Activated CD4-positive, alpha-beta memory T cell treated with anti-CD3 and anti-CD28 coated beads, Interleukin-2, amount 10 ng/mL, durations not matched to agents 7 days and 5 days (primary cell): ENCODE measurements at regions of chr11 and their contacts with region 1.

Region 1: GRCh38 chr11:11856638-11857037 is 14.9 kb downstream of the USP47 start:
- DNase-seq: no peak
- H3K4me3 Mint-ChIP-seq: no peak overlapping the region
- H3K27ac Mint-ChIP-seq: no peak overlapping the region
- H3K4me1 Mint-ChIP-seq: peaks cover 41% of the 10 kb centered on the region
- H3K27me3 Mint-ChIP-seq: no peaks in the 10 kb centered on the region

Region 2: DNA sequence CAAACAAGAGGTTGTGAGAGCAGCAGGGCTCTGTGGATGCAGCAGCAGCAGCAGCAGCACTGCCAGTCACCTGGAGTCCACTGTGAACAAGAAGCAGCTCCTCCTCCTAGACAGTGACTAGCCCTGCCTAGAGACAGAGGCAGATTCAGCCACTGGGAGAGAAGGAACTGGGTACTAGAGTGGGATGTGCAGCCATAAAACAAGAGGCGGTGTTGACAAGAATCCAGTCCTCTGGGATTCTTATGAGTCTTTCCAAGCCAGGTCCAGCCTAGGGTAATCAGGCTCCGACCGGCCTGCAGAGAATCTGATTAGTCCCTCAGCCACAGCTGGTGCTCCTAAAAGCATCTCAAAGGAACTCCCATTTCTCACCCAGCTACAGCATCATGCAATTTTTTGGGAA is 98.7 kb before region 1 on chr11:
- CTCF ChIA-PET with region 1: no interaction called
- POLR2A ChIA-PET with region 1: no interaction called
- DNase-seq: no peak
- H3K4me3 Mint-ChIP-seq: no peak overlapping the region
- H3K27ac Mint-ChIP-seq: no peak overlapping the region
- H3K4me1 Mint-ChIP-seq: no peaks in the 10 kb centered on the region
- H3K27me3 Mint-ChIP-seq: peaks cover 14% of the 10 kb centered on the region

Region 3: DNA sequence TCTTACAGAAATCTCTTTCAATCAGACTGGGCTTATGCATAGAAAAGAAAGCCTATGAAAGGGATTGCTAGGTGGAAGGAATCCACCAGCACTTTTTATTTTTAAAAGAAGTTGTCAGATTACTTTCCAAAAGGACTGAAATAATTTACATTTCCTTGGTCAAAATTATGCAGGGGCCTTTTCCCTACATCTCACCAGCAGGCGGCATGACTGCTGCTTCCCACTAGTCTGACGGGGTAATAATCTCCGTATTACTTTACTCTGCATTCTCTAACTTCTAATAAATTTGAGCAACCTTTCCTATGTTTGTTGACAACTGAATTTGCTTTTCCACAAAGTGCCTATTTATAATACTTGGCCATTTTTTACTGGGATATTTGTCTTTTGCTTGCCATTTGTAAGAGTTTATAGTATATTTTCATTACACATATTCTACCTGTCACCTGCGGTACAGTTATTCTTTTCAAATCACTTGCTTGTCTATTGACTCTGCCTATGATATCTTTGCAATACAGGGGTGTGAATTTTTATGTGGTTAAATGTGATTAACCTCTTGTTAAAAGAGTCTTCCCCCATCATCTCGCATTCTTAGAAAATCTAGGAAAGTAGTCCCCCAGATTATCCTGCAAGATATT is 66.8 kb before region 1 on chr11:
- CTCF ChIA-PET with region 1: no interaction called
- POLR2A ChIA-PET with region 1: no interaction called
- DNase-seq: no peak
- H3K4me3 Mint-ChIP-seq: no peak overlapping the region
- H3K27ac Mint-ChIP-seq: no peak overlapping the region
- H3K4me1 Mint-ChIP-seq: peaks cover 1% of the 10 kb centered on the region
- H3K27me3 Mint-ChIP-seq: peaks cover 16% of the 10 kb centered on the region

Region 4: GRCh38 chr11:11841723-11842420 is 14.8 kb before region 1 on chr11 and contains the start of gene USP47:
- CTCF ChIA-PET with region 1: interaction called, 26 read pairs
- POLR2A ChIA-PET with region 1: interaction called, 7 read pairs
- DNase-seq: peak; percentile 94
- H3K4me3 Mint-ChIP-seq: no peak within 1 kb of the TSS
- H3K27ac Mint-ChIP-seq: peak within 1 kb of the TSS; percentile 51
- H3K4me1 Mint-ChIP-seq: peaks cover 7% of the 10 kb centered on the region
- H3K27me3 Mint-ChIP-seq: peaks cover 18% of the 10 kb centered on the region
- total RNA-seq, gene USP47: 38.9 to 41.7 TPM

Region 5: DNA sequence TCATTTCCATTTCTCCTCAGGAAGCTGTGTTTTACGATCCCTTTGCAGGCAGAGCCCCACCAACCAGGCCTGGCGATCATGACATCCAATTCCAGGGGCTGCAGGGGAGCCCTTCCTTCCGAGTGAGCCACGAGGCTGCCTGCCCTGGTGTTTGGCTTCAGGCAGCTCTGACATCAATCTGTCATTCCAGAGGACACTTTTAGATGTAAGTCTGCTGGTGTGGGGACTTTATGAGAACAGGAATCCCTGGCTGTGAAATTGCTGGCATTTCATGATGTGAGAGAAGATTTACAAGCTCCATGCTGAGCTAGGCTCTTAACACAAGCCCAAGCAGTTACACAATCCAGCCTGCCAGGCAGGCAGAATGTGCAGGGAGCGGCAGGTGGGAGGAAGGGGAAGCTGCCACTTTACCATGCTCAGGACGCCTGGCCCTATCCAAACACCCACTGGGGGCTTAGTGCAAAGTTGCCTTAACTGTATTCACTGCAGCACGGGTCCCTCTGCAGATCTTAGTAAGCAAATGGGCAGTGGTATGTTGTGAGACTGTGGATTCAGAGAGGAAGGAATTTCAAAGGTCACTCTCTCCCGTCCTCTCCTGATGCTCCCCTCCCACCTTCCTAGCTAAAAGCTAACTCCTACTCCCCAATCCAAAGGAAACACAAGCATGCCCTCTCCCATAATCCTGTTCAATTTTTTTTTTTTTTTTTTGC is 210.3 kb after region 1 on chr11:
- CTCF ChIA-PET with region 1: no interaction called
- POLR2A ChIA-PET with region 1: no interaction called
- DNase-seq: no peak
- H3K4me3 Mint-ChIP-seq: no peak overlapping the region
- H3K27ac Mint-ChIP-seq: no peak overlapping the region
- H3K4me1 Mint-ChIP-seq: peaks cover 14% of the 10 kb centered on the region
- H3K27me3 Mint-ChIP-seq: peaks cover 10% of the 10 kb centered on the region